ENCODE measurements at regions of chr20 and their contacts with region 1.

Region 1: GRCh38 chr20:50575847-50576720 is 65.9 kb downstream of the PTPN1 start:
- DNase-seq: peak; percentile 48 to 59 (median 57)
- H3K4me3 ChIP-seq: no peak overlapping the region
- H3K4me3 Mint-ChIP-seq: no peak overlapping the region
- H3K27ac ChIP-seq: no peak overlapping the region
- H3K27ac Mint-ChIP-seq: peak overlapping the region in 4 of 7 donors; percentile 47 to 88 (median 82)
- H3K4me1 ChIP-seq: peaks cover 10% of the 10 kb centered on the region
- H3K4me1 Mint-ChIP-seq: peaks cover 12 to 45% (median 29%) of the 10 kb centered on the region in 4 donors
- H3K27me3 ChIP-seq: no peaks in the 10 kb centered on the region
- H3K27me3 Mint-ChIP-seq: no peaks in the 10 kb centered on the region

Region 2: DNA sequence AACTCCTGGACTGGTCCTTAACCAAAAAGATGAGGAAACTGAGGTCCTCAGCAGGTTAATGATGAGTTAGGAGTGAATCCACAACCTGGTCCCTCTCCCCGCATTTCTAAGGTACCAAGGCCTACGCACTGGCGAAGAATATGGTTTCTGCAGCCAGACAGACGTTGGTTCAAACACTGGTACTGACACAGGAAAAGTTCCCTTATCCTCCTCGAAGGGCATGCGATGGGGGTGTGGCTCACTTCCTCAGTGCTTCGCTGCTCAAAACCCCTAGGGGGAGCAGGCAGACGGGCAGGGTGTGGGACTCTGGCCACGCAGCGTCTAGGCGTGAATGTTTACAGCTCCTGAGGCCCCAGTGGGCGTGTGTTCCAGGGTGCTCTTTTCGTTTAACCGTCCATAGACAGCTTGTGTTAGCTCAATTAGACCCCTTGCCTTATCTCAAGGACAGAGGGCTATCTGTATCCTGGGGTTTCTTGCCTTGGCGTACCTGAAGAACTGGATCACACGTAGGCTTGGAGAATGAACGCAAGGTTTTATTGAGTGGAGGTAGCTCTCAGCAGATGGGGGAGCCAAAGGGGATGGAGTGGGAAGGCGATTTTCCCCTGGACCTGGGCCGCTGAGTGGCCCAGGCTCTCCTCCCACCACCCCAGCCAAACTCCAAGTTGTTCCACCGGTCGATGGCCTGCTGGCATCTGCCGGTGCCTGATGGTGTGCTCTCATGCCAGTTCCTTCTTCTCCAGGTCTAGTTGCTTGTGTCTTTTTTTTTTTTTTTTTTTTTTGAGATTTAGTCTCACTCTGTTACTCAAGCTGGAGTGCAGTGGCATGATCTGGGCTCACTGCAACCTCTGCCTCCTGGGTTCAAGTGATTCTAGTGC is 97.7 kb before region 1 on chr20:
- CTCF ChIA-PET with region 1: interaction called, 106 read pairs
- POLR2A ChIA-PET with region 1: no interaction called
- intact Hi-C with region 1: loop called (anchors 1 kb)
- DNase-seq: peak; percentile 74 to 82 (median 75)
- H3K4me3 ChIP-seq: no peak overlapping the region
- H3K4me3 Mint-ChIP-seq: peak overlapping the region in 2 of 8 donors; percentile 4 to 25
- H3K27ac ChIP-seq: no peak overlapping the region
- H3K27ac Mint-ChIP-seq: peak overlapping the region in 4 of 7 donors; percentile 5 to 37 (median 22)
- H3K4me1 ChIP-seq: peaks cover 20% of the 10 kb centered on the region
- H3K4me1 Mint-ChIP-seq: peaks cover 13 to 23% (median 21%) of the 10 kb centered on the region in 4 donors
- H3K27me3 ChIP-seq: no peaks in the 10 kb centered on the region
- H3K27me3 Mint-ChIP-seq: no peaks in the 10 kb centered on the region

Region 3: DNA sequence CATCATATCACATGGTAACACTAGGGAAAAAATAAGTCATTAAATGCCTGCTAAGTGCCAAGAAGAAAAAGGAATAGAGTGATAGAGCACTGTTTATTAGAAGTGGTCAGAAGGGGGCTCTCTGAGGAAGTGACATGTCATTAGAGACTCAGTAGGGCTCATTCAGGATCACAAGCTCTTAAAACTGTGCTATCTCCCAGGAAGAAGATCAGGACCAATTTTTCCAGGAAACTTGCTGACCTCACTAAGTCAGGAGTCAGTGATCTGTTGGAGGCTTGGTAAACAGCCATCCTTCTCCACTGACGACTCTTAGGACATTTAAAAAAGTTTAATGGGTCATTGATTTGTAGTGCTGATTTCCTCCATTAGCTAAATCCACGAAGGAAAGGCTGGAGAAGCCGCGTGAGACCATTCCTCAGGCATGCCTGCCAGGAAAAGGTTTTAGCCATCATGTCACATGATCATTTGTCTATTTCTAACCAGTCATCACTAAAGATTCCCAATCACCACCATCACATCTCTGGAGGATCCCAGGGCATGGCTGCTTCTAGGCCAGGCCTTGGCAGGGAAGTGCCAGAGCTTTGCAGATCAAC is 71.8 kb before region 1 on chr20:
- CTCF ChIA-PET with region 1: interaction called, 244 read pairs
- POLR2A ChIA-PET with region 1: interaction called, 6 read pairs
- intact Hi-C with region 1: loop called (anchors 1 kb)
- DNase-seq: peak in 1 of 5 donors; percentile 22
- H3K4me3 ChIP-seq: no peak overlapping the region
- H3K4me3 Mint-ChIP-seq: no peak overlapping the region
- H3K27ac ChIP-seq: no peak overlapping the region
- H3K27ac Mint-ChIP-seq: peak overlapping the region in 2 of 7 donors; percentile 32 to 87
- H3K4me1 ChIP-seq: peaks cover 1% of the 10 kb centered on the region
- H3K4me1 Mint-ChIP-seq: peaks cover 0 to 11% (median 3%) of the 10 kb centered on the region in 4 donors
- H3K27me3 ChIP-seq: no peaks in the 10 kb centered on the region
- H3K27me3 Mint-ChIP-seq: no peaks in the 10 kb centered on the region

Region 4: GRCh38 chr20:50561379-50562078 is 14.6 kb before region 1 on chr20:
- CTCF ChIA-PET with region 1: interaction called, 13 read pairs
- POLR2A ChIA-PET with region 1: no interaction called
- intact Hi-C with region 1: no loop called
- DNase-seq: no peak
- H3K4me3 ChIP-seq: no peak overlapping the region
- H3K4me3 Mint-ChIP-seq: peak overlapping the region in 4 of 8 donors; percentile 14 to 75 (median 52)
- H3K27ac ChIP-seq: no peak overlapping the region
- H3K27ac Mint-ChIP-seq: peak overlapping the region; percentile 54 to 85 (median 77)
- H3K4me1 ChIP-seq: peaks cover 50% of the 10 kb centered on the region
- H3K4me1 Mint-ChIP-seq: peaks cover 38 to 77% (median 60%) of the 10 kb centered on the region in 4 donors
- H3K27me3 ChIP-seq: no peaks in the 10 kb centered on the region
- H3K27me3 Mint-ChIP-seq: no peaks in the 10 kb centered on the region